ENCODE measurements at regions of chr1 and their contacts with region 1.

Region 1: GRCh38 chr1:8643542-8644536 is 173.6 kb downstream of the RERE start:
- DNase-seq: no peak
- H3K4me3 ChIP-seq: no peak overlapping the region
- CTCF ChIP-seq: no peak

Region 2: GRCh38 chr1:8660411-8660828 is 16.6 kb after region 1 on chr1:
- CTCF ChIA-PET with region 1: interaction called, 6 read pairs
- POLR2A ChIA-PET with region 1: interaction called, 10 read pairs
- DNase-seq: peak; percentile 81
- H3K4me3 ChIP-seq: peak overlapping the region; percentile 21; the same call in 1 of the 2 replicates
- CTCF ChIP-seq: no peak